CD4-positive, alpha-beta memory T cell (primary cell): ENCODE measurements at regions of chr1 and their contacts with region 1.

Region 1: DNA sequence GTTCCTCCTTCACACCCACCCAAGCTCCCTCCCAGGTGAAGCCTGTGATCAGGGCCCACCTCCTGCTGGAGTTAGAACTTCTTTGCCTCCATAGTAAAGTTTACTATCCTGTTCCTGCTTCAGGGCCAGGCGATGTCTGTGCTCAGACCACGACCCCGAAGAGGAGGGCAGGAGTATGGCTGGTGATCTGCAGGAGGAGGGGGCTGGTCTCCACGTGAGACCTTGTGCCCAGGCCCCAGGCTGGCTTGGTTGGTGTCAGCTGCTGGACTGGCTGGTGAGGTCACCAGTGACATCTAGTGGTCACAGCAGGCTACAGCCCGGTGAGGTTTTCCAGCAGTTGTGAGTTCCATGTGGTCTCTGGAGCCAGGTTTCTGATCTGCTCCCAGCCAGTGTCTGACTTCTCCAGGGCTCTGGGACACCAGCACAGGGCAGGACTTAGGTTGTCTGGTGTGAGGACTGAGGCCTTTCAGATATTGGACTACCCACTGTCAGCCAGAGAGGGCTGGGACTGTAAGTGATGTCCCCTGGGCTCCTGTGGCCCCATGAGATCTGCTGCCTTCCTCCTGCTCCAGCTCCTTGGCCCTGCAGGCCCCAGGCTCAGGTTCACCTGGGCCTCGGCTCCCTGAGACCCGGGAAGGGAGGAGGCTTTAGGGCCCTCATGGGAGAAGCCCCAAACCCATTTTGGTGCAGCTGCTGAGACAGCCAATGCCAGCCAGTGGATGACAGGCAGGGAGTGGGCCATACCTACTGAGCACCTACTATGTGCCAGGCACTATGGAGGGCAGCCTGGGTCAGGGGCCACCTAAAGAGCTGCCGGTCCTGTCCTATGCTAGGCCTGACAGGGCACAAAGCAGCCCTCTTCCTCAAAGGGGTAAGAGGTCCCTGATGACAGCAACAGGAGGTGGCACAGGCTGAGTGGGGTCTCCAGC is 6.0 kb upstream of the UBL4B start:
- DNase-seq: peak; percentile 43 to 56 (median 53)
- H3K4me3 ChIP-seq: no peak overlapping the region
- H3K4me3 Mint-ChIP-seq: no peak overlapping the region
- H3K27ac ChIP-seq: no peak overlapping the region
- H3K27ac Mint-ChIP-seq: peak overlapping the region in 1 of 7 donors; percentile 56
- H3K4me1 ChIP-seq: no peaks in the 10 kb centered on the region
- H3K4me1 Mint-ChIP-seq: no peaks in the 10 kb centered on the region
- H3K27me3 ChIP-seq: no peaks in the 10 kb centered on the region
- H3K27me3 Mint-ChIP-seq: peaks cover 6 to 10% of the 10 kb centered on the region in 2 donors

Region 2: GRCh38 chr1:110053557-110054428 is 52.5 kb before region 1 on chr1:
- CTCF ChIA-PET with region 1: interaction called, 35 read pairs
- POLR2A ChIA-PET with region 1: no interaction called
- intact Hi-C with region 1: loop called (anchors 1 kb)
- DNase-seq: peak; percentile 36 to 60 (median 53)
- H3K4me3 ChIP-seq: no peak overlapping the region
- H3K4me3 Mint-ChIP-seq: no peak overlapping the region
- H3K27ac ChIP-seq: no peak overlapping the region
- H3K27ac Mint-ChIP-seq: peak overlapping the region in 3 of 7 donors; percentile 37 to 83 (median 49)
- H3K4me1 ChIP-seq: no peaks in the 10 kb centered on the region
- H3K4me1 Mint-ChIP-seq: peaks cover 1 to 9% (median 5%) of the 10 kb centered on the region in 4 donors
- H3K27me3 ChIP-seq: no peaks in the 10 kb centered on the region
- H3K27me3 Mint-ChIP-seq: no peaks in the 10 kb centered on the region

Region 3: DNA sequence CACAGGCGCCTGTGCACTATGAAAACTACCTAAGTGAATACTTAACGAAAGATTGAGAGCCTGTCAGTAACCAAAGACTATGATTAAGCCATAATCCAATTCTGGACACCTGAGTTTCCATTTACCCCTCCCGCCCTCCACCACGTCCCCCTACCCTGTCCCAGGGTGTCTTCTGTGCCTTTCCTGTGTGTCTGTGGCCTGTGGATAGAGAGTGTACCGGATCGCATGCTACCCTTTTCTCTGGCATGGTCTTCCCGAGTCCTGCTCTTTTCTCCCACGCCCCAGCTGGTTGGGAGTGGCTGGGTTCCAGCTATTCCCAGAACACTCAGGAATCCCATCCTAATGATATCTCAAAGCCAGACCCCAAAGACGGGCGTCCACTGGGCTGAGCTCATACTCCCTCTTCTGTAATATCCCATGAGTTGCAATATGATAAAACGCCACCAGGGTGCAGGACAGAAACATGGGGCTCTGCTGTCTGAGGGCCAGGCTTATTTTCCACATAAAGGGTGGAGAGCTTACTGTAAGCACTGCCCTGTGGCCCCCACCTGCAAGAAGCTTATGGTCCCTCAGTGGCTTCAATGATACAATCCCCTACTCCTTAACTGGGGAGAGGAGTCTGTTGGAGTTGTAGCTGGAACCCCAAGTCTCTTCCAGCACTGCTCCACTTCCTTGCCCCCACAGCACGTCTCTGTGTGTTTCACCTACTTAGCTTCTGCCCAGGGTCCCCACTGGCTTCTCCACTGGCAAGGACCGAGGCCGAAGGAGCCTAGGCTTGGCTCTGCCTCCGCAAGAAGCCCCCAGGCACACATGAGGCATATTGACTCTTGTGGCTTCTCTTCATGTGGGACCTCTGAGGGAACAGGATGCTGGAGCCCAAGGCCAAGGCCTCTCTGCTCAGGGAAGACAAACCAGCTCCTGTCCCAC is 18.2 kb before region 1 on chr1:
- CTCF ChIA-PET with region 1: interaction called, 40 read pairs
- POLR2A ChIA-PET with region 1: interaction called, 3 read pairs
- intact Hi-C with region 1: no loop called
- DNase-seq: peak in 2 of 5 donors; percentile 42 to 46
- H3K4me3 ChIP-seq: no peak overlapping the region
- H3K4me3 Mint-ChIP-seq: peak overlapping the region in 1 of 8 donors; percentile 55
- H3K27ac ChIP-seq: no peak overlapping the region
- H3K27ac Mint-ChIP-seq: no peak overlapping the region
- H3K4me1 ChIP-seq: peaks cover 12% of the 10 kb centered on the region
- H3K4me1 Mint-ChIP-seq: peaks cover 9 to 22% (median 11%) of the 10 kb centered on the region in 4 donors
- H3K27me3 ChIP-seq: peaks cover 24% of the 10 kb centered on the region
- H3K27me3 Mint-ChIP-seq: peaks cover 31 to 44% of the 10 kb centered on the region in 2 donors

Region 4: GRCh38 chr1:110118636-110119615 is 12.6 kb after region 1 on chr1:
- CTCF ChIA-PET with region 1: interaction called, 20 read pairs
- POLR2A ChIA-PET with region 1: no interaction called
- intact Hi-C with region 1: no loop called
- DNase-seq: no peak
- H3K4me3 ChIP-seq: no peak overlapping the region
- H3K4me3 Mint-ChIP-seq: no peak overlapping the region
- H3K27ac ChIP-seq: no peak overlapping the region
- H3K27ac Mint-ChIP-seq: peak overlapping the region in 2 of 7 donors; percentile 10 to 56
- H3K4me1 ChIP-seq: no peaks in the 10 kb centered on the region
- H3K4me1 Mint-ChIP-seq: peaks cover 0 to 5% (median 2%) of the 10 kb centered on the region in 4 donors
- H3K27me3 ChIP-seq: peaks cover 4% of the 10 kb centered on the region
- H3K27me3 Mint-ChIP-seq: peaks cover 14 to 23% of the 10 kb centered on the region in 2 donors

Region 5: GRCh38 chr1:110471163-110471562 is 364.9 kb after region 1 on chr1:
- CTCF ChIA-PET with region 1: no interaction called
- POLR2A ChIA-PET with region 1: no interaction called
- intact Hi-C with region 1: no loop called
- DNase-seq: no peak
- H3K4me3 ChIP-seq: no peak overlapping the region
- H3K4me3 Mint-ChIP-seq: no peak overlapping the region
- H3K27ac ChIP-seq: no peak overlapping the region
- H3K27ac Mint-ChIP-seq: no peak overlapping the region
- H3K4me1 ChIP-seq: no peaks in the 10 kb centered on the region
- H3K4me1 Mint-ChIP-seq: no peaks in the 10 kb centered on the region
- H3K27me3 ChIP-seq: peaks cover 3% of the 10 kb centered on the region
- H3K27me3 Mint-ChIP-seq: peaks cover 4 to 6% of the 10 kb centered on the region in 2 donors